Panc1 (cell line): ENCODE measurements at regions of chr2 and their contacts with region 1.

Region 1: DNA sequence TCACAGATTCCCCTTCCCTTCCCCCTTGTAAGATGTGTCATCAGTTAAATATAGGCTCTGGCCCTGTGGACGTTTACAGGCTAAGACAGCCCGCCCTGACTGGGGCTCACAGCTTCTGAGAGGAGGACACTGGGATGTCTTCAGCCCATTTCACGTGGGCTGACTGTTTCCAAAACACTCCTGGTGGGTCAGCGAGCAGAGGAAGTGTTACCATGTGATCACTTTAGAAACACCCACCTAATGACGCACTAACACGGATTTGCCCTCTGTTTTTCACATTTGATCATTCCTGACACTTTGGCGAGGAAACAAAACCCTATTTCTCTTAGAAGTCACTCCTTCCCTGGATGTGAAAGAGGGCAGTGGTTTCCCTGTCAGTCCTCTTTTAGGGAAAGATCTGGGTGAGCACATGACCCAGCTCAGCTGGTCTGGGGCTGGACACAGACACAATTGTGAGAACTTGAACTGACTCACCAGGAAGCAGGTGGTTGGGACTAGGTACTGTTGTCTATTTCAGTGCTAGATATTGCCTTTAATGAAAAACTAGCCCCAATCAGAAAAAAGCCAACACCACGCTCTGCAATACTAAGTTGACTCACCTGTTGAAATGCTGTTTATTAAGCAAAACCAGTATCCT is 38.8 kb downstream of the BMP10 start:
- DNase-seq: no peak
- ATAC-seq: peak; percentile 33; the same call in 1 of the 2 replicates
- H3K4me3 ChIP-seq: no peak overlapping the region
- H3K27ac ChIP-seq: no peak overlapping the region
- H3K4me1 ChIP-seq: no peaks in the 10 kb centered on the region
- H3K27me3 ChIP-seq: no peaks in the 10 kb centered on the region
- CTCF ChIP-seq: no peak

Region 2: GRCh38 chr2:68620772-68621171 is 211.6 kb before region 1 on chr2:
- CTCF ChIA-PET with region 1: no interaction called
- POLR2A ChIA-PET with region 1: no interaction called
- in situ Hi-C with region 1: no loop called
- intact Hi-C with region 1: no loop called
- DNase-seq: no peak
- ATAC-seq: no peak
- H3K4me3 ChIP-seq: no peak overlapping the region
- H3K27ac ChIP-seq: no peak overlapping the region
- H3K4me1 ChIP-seq: no peaks in the 10 kb centered on the region
- H3K27me3 ChIP-seq: no peaks in the 10 kb centered on the region
- CTCF ChIP-seq: no peak

Region 3: GRCh38 chr2:68751397-68752339 is 80.7 kb before region 1 on chr2:
- CTCF ChIA-PET with region 1: interaction called, 10 read pairs
- POLR2A ChIA-PET with region 1: no interaction called
- in situ Hi-C with region 1: no loop called
- intact Hi-C with region 1: loop called (anchors 10 kb)
- DNase-seq: peak; percentile 74
- ATAC-seq: peak; percentile 99
- H3K4me3 ChIP-seq: no peak overlapping the region
- H3K27ac ChIP-seq: no peak overlapping the region
- H3K4me1 ChIP-seq: no peaks in the 10 kb centered on the region
- H3K27me3 ChIP-seq: no peaks in the 10 kb centered on the region
- CTCF ChIP-seq: peak; percentile 93